Endothelial cell of umbilical vein (primary cell): ENCODE measurements at regions of chr13 and their contacts with region 1.

Region 1: DNA sequence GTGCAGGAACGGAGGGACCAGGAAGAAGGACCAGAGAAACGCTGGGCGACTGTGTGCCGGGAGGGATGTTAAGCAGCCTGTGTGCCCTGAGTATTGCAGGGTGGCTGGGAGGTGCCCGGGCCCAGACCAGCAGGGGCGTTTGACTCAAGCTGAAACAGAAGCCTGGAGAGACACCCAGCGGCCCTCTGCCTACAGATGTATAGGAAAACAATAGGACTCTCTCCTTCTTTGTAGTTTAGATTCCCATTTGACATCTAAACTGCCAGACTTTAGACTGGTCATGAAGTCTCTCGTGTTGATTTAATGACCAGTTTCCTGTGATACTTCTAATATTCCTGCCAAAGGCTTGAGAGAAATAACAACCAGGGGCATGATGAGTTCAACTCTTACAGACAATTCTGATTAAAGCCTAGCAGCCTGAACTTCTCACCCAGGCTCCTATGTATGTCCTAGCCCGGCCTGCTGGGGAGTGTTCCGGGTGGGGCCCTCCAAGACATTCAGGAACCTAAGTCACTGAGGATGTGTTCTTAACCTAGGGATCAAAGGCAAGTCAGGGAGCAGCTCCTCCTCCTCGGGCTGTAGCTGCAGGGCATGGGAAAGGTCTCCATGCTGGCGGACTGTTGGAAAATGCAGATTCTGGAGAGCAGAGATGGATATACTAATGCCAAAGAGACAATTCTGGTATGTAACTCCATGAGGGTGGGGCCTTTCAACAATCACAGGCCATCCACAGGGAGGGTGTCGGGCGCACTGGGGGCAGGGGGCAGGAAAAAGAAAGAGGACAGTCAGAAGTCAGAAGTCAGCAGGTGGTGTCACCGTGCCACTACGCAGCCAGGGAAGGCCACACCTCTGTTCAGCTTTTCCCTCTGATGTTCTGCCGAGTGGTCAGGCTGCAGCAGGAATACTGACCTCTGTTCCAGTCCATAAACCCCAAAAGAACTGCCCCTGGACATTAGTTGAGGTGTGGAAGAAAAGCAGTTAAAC is 131.8 kb downstream of the STARD13 start:
- DNase-seq: peak; percentile 96
- H3K4me3 ChIP-seq: no peak overlapping the region
- H3K27ac ChIP-seq: peak overlapping the region; percentile 91
- H3K4me1 ChIP-seq: peaks cover 31% of the 10 kb centered on the region
- H3K27me3 ChIP-seq: no peaks in the 10 kb centered on the region
- CTCF ChIP-seq: peak; percentile 59 to 65
- POLR2A ChIP-seq: peak; percentile 46

Region 2: DNA sequence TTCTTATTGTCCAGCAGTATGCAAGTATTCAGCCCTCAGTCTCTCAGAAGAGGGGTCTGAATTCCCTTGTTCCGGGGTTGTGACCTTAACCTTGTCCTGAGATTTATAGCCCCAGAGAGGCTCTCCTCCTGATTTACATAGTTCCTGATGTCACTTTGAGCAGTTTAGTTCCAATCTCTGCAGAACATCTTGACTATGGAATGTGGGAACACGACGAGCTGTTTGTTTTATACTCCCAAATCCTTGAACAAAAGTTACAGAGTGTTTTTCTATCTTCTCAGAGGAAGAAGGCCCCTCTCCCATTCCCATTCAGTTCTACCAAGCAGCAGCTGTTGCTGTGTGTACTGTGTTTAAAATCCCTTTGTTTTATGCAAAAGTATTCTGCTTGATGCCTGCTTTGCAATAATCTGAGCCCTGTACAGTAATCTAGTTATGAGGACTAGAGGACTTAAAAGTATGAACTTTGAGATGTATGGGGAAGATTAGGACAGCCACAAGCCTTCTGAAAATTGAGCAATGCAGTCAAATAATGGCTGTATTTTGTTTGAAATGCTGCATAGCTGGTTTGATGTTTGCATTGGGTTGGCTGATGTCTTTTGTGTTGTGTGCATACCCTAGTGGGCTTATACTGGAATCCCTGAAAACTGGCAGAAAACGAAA is 62.8 kb before region 1 on chr13:
- CTCF ChIA-PET with region 1: no interaction called
- POLR2A ChIA-PET with region 1: no interaction called
- dilution Hi-C with region 1: no loop called
- intact Hi-C with region 1: loop called (anchors 1 kb)
- DNase-seq: peak; percentile 83
- H3K4me3 ChIP-seq: no peak overlapping the region
- H3K27ac ChIP-seq: peak overlapping the region; percentile 53
- H3K4me1 ChIP-seq: peaks cover 42% of the 10 kb centered on the region
- H3K27me3 ChIP-seq: no peaks in the 10 kb centered on the region
- CTCF ChIP-seq: no peak
- POLR2A ChIP-seq: no peak

Region 3: DNA sequence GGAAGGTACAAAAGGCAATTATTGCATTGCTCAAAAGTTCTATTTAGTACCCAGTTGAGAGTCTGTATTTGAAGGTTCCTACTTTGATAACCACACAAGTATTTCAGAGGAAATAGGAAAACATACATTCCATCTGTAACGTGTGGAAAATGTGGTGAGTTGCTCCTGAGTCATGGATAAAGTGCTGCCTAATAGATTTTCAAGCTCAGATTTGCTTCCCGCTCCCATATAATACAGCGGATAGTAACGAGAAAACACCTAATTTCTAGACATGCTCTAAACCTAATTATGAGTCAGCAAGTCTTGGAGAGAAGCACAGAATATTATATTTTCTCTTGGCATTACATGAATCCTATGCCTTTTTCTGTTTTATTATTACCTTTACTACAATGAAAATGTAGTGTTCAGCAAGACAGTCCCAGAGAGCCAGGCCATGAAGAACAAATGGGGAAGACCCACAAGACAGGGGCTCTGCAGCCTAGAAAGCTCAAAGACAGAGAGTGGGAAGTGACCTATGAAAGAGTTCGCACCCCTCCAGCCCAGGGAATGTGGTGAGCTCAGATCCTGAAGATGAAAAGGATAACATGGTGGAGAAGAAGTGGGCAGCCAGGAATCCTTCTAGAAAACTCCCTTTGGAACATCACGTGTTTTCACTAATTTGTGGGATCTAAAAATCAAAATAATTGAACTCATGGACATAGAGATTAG is 15.7 kb after region 1 on chr13:
- CTCF ChIA-PET with region 1: interaction called, 12 read pairs
- POLR2A ChIA-PET with region 1: interaction called, 4 read pairs
- dilution Hi-C with region 1: no loop called
- intact Hi-C with region 1: no loop called
- DNase-seq: peak; percentile 87
- H3K4me3 ChIP-seq: no peak overlapping the region
- H3K27ac ChIP-seq: peak overlapping the region; percentile 83
- H3K4me1 ChIP-seq: peaks cover 22% of the 10 kb centered on the region
- H3K27me3 ChIP-seq: no peaks in the 10 kb centered on the region
- CTCF ChIP-seq: no peak
- POLR2A ChIP-seq: no peak

Region 4: DNA sequence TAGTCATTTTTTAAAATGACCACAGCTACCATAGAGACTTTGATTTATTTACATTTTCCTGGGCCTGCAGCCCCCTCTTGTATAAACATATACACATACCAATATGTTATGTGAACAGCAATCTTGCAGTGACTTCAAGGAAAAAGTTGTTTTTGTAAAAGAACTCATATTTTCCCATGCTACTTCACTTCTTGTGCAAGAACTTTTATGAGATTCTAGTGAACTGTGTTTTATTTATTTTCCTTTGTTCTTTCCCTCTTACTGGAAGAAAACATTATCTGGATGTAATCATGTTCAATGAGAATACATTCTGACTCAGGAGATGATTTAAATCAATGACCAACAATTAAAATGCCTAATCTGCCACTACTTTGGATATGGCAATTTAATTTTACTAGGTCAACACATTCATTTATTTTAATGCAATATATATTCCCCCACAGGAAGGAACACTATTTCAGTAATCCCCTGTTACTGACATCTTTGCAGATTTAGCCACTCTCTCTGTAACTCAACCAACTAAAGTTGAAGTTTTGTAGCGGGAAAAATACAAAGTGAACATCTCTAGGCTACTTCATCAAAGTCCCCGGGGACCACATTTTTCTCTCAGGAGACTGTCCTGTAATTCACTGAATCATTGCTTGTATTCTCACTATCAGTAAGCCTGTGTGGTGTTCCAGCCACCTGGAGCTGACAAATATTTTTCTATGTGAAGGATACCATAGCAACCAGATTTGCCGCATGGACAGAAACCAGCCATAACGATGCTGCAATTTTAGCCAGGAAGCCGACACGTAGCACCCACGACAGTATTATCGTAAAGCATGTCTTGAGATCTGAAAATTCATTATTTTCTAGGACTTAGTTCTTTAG is 41.3 kb after region 1 on chr13:
- CTCF ChIA-PET with region 1: interaction called, 4 read pairs
- POLR2A ChIA-PET with region 1: no interaction called
- dilution Hi-C with region 1: no loop called
- intact Hi-C with region 1: loop called (anchors 1 kb)
- DNase-seq: peak; percentile 86
- H3K4me3 ChIP-seq: no peak overlapping the region
- H3K27ac ChIP-seq: peak overlapping the region; percentile 87
- H3K4me1 ChIP-seq: peaks cover 39% of the 10 kb centered on the region
- H3K27me3 ChIP-seq: no peaks in the 10 kb centered on the region
- CTCF ChIP-seq: no peak
- POLR2A ChIP-seq: no peak

Region 5: GRCh38 chr13:33454844-33455705 is 301.4 kb after region 1 on chr13:
- CTCF ChIA-PET with region 1: no interaction called
- POLR2A ChIA-PET with region 1: no interaction called
- dilution Hi-C with region 1: no loop called
- intact Hi-C with region 1: no loop called
- DNase-seq: no peak
- H3K4me3 ChIP-seq: no peak overlapping the region
- H3K27ac ChIP-seq: no peak overlapping the region
- H3K4me1 ChIP-seq: no peaks in the 10 kb centered on the region
- H3K27me3 ChIP-seq: no peaks in the 10 kb centered on the region
- CTCF ChIP-seq: no peak
- POLR2A ChIP-seq: no peak

Region 6: GRCh38 chr13:33775339-33776108 is 621.8 kb after region 1 on chr13:
- CTCF ChIA-PET with region 1: no interaction called
- POLR2A ChIA-PET with region 1: no interaction called
- dilution Hi-C with region 1: no loop called
- intact Hi-C with region 1: no loop called
- DNase-seq: no peak
- H3K4me3 ChIP-seq: no peak overlapping the region
- H3K27ac ChIP-seq: no peak overlapping the region
- H3K4me1 ChIP-seq: no peaks in the 10 kb centered on the region
- H3K27me3 ChIP-seq: peaks cover 8 to 18% of the 10 kb centered on the region in 2 experiments
- CTCF ChIP-seq: no peak
- POLR2A ChIP-seq: no peak